ENCODE measurements at regions of chr7 and their contacts with region 1.

Region 1: DNA sequence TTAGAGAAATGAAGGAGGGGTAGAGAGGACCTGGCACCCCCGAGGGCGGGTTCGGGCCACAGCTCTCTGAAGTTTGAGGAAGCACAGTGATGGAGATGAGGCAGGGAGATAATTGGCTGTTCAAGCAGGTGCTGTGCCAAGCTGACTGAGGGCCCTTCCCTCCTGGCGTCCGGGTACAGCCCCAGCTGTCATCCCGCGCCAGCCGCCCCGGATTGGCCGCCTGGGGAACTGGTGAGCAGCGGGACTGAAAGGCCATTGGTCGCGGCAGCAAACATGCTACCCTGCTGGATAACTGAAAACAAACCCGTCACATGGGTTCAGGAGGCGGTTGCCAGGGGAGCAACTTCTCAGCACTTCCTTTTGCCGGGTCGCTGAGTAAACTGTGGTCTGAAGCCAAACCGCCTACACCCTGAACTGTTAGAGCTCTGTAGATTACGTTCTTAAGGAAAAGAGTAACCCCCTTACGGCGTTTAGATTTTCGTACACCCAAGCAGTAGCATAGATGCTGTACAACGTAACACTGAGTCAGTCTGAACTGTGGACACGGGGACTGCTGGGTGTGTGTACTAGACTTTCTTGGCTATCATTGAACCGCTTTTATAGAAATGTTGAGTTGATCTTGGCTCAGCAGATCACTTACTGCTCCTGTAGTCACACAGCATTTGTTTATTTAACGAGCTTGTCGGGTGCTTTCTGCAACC is 1.3 kb downstream of the INSIG1 start:
- DNase-seq: peak; percentile 98
- H3K4me3 Mint-ChIP-seq: peak overlapping the region; percentile 88
- H3K27ac Mint-ChIP-seq: peak overlapping the region; percentile 92
- H3K4me1 Mint-ChIP-seq: peaks cover 30% of the 10 kb centered on the region
- H3K27me3 Mint-ChIP-seq: no peaks in the 10 kb centered on the region

Region 2: DNA sequence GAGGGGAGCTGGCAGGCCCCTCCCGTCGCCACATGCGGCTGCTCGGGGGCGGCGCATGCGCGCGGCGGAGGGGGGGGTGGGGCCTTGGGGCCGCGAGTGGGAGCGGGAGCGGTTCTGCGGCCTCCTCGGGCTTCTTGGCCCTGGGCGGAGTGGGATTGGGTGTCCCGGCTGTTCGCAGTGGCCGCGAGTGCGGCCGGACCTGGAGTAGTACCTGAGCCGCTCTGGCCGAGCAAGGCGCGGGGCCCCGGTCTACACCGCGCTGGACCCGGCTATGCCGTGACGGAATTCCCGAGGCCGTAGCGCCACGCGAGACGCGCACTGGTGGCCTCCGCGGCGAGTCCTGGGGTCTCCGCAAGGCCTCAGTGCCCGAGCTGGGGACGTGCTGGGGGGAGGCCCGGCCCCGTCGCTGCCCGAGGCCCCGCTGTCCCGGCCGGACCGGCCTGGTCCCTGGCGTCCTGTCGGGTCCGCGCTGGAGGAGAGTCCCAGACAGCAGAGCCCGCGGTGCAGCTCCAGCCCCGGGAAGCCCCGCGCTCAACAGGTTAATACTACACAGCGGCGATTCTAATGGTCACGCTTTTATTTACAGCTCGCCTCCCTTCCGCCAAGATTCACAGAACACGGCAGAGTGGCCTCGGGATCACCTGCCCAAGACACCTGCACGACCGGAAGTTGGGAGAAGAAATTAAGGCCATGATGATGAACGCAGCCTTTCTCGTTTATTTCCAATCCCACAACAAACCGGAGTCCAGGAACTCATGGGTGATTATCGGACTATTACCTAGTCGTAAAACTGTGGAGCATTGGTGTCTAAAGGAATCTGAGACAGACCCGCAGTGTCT is 295.4 kb before region 1 on chr7:
- CTCF ChIA-PET with region 1: no interaction called
- intact Hi-C with region 1: loop called (anchors 1 kb)
- DNase-seq: peak; percentile 75
- H3K4me3 Mint-ChIP-seq: peak overlapping the region; percentile 92
- H3K27ac Mint-ChIP-seq: peak overlapping the region; percentile 89
- H3K4me1 Mint-ChIP-seq: peaks cover 7% of the 10 kb centered on the region
- H3K27me3 Mint-ChIP-seq: no peaks in the 10 kb centered on the region

Region 3: GRCh38 chr7:155190688-155191087 is 108.3 kb before region 1 on chr7:
- CTCF ChIA-PET with region 1: interaction called, 9 read pairs
- intact Hi-C with region 1: loop called (anchors 1 kb)
- DNase-seq: peak; percentile 69
- H3K4me3 Mint-ChIP-seq: no peak overlapping the region
- H3K27ac Mint-ChIP-seq: no peak overlapping the region
- H3K4me1 Mint-ChIP-seq: peaks cover 11% of the 10 kb centered on the region
- H3K27me3 Mint-ChIP-seq: peaks cover 13% of the 10 kb centered on the region

Region 4: DNA sequence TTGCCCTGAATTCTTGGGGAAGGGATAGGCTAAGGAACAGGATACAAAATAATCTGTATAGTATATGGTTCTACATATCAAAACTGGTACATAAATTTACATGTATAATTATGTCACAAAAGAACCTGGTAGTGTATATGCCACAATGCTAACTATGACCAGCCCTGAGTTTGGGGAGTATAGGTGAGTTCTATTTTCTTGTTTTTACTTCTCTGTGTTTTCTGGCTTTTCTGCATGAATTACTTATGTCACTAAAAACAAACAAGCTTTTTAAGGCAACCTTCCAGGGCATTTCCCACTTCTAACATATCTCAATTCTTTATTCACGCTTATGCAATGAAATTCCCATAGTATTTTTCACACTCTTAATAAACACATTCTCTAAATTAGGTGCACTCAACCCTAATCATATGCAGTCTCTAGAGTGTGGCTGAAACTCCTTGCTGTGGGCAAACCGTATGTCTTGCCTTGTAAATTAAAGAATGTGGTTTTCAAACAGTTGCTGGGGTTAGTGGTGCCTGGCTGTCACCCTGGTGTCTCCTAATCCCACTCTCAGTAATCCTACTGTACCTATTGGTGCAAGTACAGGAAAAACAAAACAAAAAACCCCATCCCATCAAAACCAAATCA is 15.3 kb before region 1 on chr7:
- CTCF ChIA-PET with region 1: interaction called, 7 read pairs
- intact Hi-C with region 1: loop called (anchors 1 kb)
- DNase-seq: peak; percentile 60
- H3K4me3 Mint-ChIP-seq: no peak overlapping the region
- H3K27ac Mint-ChIP-seq: no peak overlapping the region
- H3K4me1 Mint-ChIP-seq: peaks cover 56% of the 10 kb centered on the region
- H3K27me3 Mint-ChIP-seq: peaks cover 3% of the 10 kb centered on the region

Region 5: GRCh38 chr7:155316421-155317113 is 17.6 kb after region 1 on chr7:
- CTCF ChIA-PET with region 1: no interaction called
- intact Hi-C with region 1: no loop called
- DNase-seq: no peak
- H3K4me3 Mint-ChIP-seq: no peak overlapping the region
- H3K27ac Mint-ChIP-seq: no peak overlapping the region
- H3K4me1 Mint-ChIP-seq: no peaks in the 10 kb centered on the region
- H3K27me3 Mint-ChIP-seq: no peaks in the 10 kb centered on the region

Region 6: DNA sequence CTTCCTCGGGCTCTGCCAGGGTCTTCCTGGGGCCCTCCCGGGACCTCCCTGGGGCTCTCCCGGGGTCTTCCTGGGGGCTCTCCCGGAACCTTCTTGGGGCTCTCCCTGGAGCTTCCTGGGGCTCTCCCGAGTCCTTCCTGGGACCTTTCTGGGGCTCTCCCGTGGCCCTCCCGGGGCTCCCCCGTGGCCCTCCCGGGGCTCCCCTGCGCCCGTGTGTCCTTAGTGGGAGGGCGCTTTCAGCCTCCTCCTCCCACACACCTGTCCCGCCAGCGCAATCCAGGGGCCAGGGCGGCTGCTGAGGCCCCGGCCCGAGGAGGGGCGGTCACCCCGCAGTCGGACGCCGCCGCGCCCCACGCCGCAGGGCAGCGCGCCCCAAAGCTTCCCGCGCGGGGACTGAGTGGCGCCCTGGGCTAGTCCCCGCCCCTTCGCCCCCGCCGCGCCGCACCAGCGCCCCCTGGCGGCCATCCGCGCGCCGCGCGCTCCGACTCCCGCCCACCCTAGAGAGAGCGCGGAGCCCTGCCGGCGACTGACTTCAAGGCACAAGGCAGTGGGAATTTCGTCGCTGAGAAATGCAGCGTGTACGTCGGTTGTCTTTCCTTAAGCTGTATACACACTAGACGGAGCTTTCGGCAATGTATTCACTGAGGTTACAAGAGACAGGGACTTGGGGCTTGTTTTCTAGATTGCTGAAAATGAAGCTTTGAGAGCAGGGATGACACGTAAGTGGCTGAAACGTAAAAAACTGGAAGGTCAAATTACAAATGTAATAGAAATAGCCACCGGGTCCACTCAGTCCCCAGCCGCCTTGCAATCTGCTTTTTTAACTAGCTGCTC is 45.8 kb after region 1 on chr7:
- CTCF ChIA-PET with region 1: interaction called, 9 read pairs
- intact Hi-C with region 1: loop called (anchors 1 kb)
- DNase-seq: peak; percentile 87
- H3K4me3 Mint-ChIP-seq: peak overlapping the region; percentile 53
- H3K27ac Mint-ChIP-seq: no peak overlapping the region
- H3K4me1 Mint-ChIP-seq: peaks cover 13% of the 10 kb centered on the region
- H3K27me3 Mint-ChIP-seq: peaks cover 12% of the 10 kb centered on the region

Region 7: GRCh38 chr7:155941688-155942087 is 642.7 kb after region 1 on chr7:
- CTCF ChIA-PET with region 1: no interaction called
- intact Hi-C with region 1: no loop called
- DNase-seq: no peak
- H3K4me3 Mint-ChIP-seq: no peak overlapping the region
- H3K27ac Mint-ChIP-seq: no peak overlapping the region
- H3K4me1 Mint-ChIP-seq: peaks cover 10% of the 10 kb centered on the region
- H3K27me3 Mint-ChIP-seq: peaks cover 5% of the 10 kb centered on the region

Region 8: DNA sequence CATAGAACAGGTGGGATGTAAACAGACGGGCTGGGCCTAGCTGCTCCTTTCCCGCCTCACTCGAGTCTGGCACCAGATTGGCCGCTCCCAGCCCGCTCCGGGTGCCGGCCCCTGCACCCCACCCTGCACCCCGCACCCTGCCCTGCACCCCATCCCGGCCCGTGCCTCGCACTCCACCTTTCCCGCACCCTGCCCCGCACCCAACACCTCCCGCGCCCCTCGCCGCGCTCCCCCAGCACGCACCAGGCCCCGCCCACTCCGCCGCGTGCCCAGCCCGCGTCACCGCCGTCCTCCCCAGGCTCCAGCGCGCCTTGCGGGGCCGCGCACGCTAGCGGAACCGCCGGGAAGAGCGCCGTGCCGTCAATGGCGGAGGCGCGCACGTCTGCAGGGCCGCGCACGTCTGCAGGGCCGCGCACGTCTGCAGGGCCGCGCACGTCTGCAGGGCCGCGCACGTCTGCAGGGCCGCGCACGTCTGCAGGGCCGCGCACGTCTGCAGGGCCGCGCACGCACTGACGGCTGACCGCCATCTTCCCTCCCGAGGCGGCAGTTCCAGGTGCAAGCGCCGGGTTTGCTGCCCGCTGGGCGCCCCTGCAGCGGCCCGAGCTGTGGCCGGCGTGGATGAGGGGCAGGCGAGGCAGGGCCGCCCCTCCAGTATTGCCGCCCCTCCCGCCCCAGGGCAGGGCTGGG is 1839.6 kb after region 1 on chr7 and contains the start of gene UBE3C:
- CTCF ChIA-PET with region 1: no interaction called
- intact Hi-C with region 1: loop called (anchors 2 kb)
- DNase-seq: peak; percentile 87
- H3K4me3 Mint-ChIP-seq: peak within 1 kb of the TSS; percentile 84
- H3K27ac Mint-ChIP-seq: peak within 1 kb of the TSS; percentile 92
- H3K4me1 Mint-ChIP-seq: peaks cover 38% of the 10 kb centered on the region
- H3K27me3 Mint-ChIP-seq: no peaks in the 10 kb centered on the region
- total RNA-seq, gene UBE3C: 52.9 to 55.7 TPM

Measured in activated naive CD4-positive, alpha-beta T cell treated with anti-CD3 and anti-CD28 coated beads for 36 hours (primary cell).